PC-9 (cell line): ENCODE measurements at regions of chr3 and their contacts with region 1.

Region 1: DNA sequence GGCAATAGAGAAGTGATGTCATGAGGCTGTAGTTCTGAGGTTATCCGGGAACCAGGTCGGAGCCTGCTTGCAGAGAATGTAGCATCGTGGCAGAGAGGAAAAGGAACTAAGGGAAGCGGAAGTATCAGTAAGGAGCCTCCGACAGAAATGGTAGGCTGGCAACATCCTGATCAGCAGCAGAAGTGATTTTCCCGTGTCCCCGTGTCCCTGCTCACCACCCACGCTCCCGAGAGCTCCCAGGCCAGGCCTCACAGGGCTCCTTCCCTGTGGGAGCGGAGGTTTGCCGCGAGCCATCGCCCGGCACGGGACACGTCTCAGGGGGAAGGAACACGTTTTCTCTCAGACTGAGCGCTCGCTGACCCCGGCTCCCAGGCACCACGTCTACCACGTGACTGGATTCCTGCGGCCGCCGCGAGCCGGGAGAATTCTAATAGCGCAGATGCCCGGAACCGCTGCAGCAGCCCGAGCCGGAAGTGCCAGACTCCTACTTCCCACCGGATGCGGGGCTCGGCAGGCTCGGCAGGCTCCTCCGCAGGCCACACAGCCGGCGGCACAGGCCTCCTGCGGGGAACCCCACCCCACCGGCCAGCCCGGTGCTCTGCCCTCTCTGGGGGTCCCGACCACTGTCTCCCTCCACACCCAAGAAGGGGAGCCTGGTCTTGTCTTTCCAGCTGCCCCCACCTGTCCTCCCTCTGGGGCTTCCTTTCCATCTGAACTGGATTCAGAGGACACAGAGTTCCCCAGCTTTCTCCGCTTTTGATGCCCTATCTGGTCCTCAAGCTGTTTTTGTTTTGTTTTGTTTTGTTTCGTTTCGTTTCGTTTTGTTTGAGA is 99.3 kb downstream of the BDH1 start:
- DNase-seq: peak; percentile 81 to 94
- H3K4me3 ChIP-seq: peak overlapping the region; percentile 71
- H3K27ac ChIP-seq: peak overlapping the region; percentile 63
- H3K4me1 ChIP-seq: peaks cover 26% of the 10 kb centered on the region
- H3K27me3 ChIP-seq: no peaks in the 10 kb centered on the region
- CTCF ChIP-seq: no peak

Region 2: DNA sequence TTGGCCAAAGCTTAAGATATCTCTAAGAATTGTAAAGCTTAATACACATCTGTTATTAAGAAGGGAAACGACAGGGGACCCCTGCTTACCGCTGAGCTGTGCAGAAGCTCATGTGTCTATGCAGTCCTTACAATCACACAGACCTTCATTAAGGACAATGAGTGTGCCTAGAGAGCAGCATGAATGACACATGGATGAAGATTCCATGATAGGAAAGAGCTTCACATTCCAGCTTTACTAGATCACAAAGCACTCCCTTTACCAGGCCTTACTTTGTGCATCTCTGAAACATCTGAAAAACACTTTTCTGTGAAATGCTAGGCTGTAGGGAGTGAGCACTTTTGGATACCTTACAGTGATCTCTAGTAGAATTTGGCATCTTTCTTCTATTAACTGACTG is 984.9 kb before region 1 on chr3:
- CTCF ChIA-PET with region 1: interaction called, 17 read pairs
- POLR2A ChIA-PET with region 1: no interaction called
- intact Hi-C with region 1: no loop called
- DNase-seq: no peak
- H3K4me3 ChIP-seq: no peak overlapping the region
- H3K27ac ChIP-seq: no peak overlapping the region
- H3K4me1 ChIP-seq: no peaks in the 10 kb centered on the region
- H3K27me3 ChIP-seq: no peaks in the 10 kb centered on the region
- CTCF ChIP-seq: no peak

Region 3: GRCh38 chr3:197256836-197257444 is 199.5 kb before region 1 on chr3:
- CTCF ChIA-PET with region 1: interaction called, 12 read pairs
- POLR2A ChIA-PET with region 1: no interaction called
- intact Hi-C with region 1: loop called (anchors 2 kb)
- DNase-seq: peak; percentile 31 to 56
- H3K4me3 ChIP-seq: no peak overlapping the region
- H3K27ac ChIP-seq: peak overlapping the region; percentile 53
- H3K4me1 ChIP-seq: 0 out of 2 replicates have a peak, but pooled peaks cover 8% of the 10 kb centered on the region
- H3K27me3 ChIP-seq: no peaks in the 10 kb centered on the region
- CTCF ChIP-seq: peak; percentile 94

Region 4: DNA sequence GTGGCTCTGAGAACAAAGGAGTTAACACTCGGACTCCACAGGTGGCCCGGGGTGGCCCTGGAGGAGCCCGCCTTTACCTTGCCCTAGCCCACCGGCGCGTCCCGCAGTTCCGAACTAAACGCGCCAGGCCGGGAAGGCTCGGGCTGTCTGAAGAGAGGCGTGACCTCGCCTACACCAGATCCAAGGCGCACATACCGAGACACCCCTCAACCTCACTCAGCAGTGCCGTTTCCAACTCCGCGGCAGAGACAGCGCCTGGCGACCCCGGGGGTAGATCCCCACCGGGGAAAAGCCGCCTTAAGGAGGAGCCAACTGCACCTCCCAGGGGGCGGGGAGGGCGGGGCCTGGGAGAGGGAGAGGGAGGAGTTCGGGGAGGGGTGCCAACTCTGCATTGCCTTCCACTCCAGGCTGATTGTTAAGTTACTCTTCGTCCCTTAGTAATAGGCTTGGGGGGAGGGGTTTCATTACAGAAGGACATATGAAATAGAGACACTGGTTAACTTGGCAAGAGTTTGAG is 158.1 kb before region 1 on chr3 and contains the start of gene DLG1:
- CTCF ChIA-PET with region 1: interaction called, 14 read pairs
- POLR2A ChIA-PET with region 1: no interaction called
- intact Hi-C with region 1: loop called (anchors 1 kb)
- DNase-seq: peak; percentile 93
- H3K4me3 ChIP-seq: peak within 1 kb of the TSS; percentile 62
- H3K27ac ChIP-seq: peak within 1 kb of the TSS; percentile 81
- H3K4me1 ChIP-seq: peaks cover 57% of the 10 kb centered on the region
- H3K27me3 ChIP-seq: no peaks in the 10 kb centered on the region
- CTCF ChIP-seq: 0 out of 2 replicates have a peak, but pooled peaks have one; percentile 22
- total RNA-seq, gene DLG1: 193 and 201 TPM in 2 replicates

Region 5: GRCh38 chr3:197372047-197372666 is 84.3 kb before region 1 on chr3:
- CTCF ChIA-PET with region 1: interaction called, 17 read pairs
- POLR2A ChIA-PET with region 1: interaction called, 3 read pairs
- intact Hi-C with region 1: loop called (anchors 1 kb)
- DNase-seq: peak; percentile 92 to 100
- H3K4me3 ChIP-seq: peak overlapping the region; percentile 4; the same call in 1 of the 2 replicates
- H3K27ac ChIP-seq: peak overlapping the region; percentile 53
- H3K4me1 ChIP-seq: peaks cover 51% of the 10 kb centered on the region
- H3K27me3 ChIP-seq: no peaks in the 10 kb centered on the region
- CTCF ChIP-seq: no peak

Region 6: DNA sequence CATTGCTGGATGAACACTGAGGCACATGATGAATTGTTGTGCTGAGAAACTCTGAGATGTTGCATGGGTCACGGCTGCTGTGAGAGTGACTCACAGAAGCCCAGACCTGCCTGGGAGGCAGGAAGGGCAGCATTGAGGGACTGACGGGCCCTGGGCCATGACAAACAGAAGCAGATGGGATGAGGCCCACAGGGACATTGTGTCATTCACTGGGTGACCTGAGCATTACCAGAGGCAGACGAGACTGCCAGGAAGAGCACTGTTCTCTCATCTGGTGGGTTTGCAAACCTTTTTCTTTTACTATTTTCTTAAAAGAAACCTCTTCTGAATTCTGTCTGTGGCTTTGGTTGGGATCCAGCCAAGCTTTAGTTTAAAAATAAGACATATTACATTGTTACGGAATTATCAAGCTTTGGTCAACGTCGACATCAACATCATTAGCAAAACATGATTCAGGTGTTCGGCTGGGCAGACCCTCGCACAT is 31.5 kb after region 1 on chr3:
- CTCF ChIA-PET with region 1: interaction called, 3 read pairs
- POLR2A ChIA-PET with region 1: interaction called, 17 read pairs
- intact Hi-C with region 1: loop called (anchors 1 kb)
- DNase-seq: peak; percentile 94 to 97
- H3K4me3 ChIP-seq: peak overlapping the region; percentile 3; the same call in 1 of the 2 replicates
- H3K27ac ChIP-seq: peak overlapping the region; percentile 71
- H3K4me1 ChIP-seq: peaks cover 67% of the 10 kb centered on the region
- H3K27me3 ChIP-seq: no peaks in the 10 kb centered on the region
- CTCF ChIP-seq: no peak

Region 7: DNA sequence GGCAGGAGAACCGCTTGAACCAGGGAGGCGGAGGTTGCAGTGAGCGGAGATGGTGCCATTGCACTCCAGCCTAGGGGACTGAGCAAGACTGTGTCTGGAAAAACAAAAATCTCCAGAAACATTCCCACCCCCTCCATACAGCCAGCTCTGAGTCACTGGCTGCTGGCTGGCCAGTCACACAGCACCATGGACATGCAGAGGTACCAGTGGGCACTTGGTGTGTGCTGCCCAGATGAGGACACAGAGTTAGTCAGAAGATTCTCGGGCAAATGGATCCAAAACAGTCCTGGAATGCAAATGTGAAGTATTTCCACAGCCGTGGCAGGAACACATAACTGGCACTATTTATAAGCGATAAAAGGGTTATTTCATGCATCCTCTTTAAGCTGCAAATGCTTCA is 54.7 kb after region 1 on chr3:
- CTCF ChIA-PET with region 1: interaction called, 5 read pairs
- POLR2A ChIA-PET with region 1: no interaction called
- intact Hi-C with region 1: loop called (anchors 1 kb)
- DNase-seq: no peak
- H3K4me3 ChIP-seq: no peak overlapping the region
- H3K27ac ChIP-seq: no peak overlapping the region
- H3K4me1 ChIP-seq: peaks cover 16% of the 10 kb centered on the region
- H3K27me3 ChIP-seq: no peaks in the 10 kb centered on the region
- CTCF ChIP-seq: no peak